ENCODE measurements at regions of chr20 and their contacts with region 1.

Region 1: DNA sequence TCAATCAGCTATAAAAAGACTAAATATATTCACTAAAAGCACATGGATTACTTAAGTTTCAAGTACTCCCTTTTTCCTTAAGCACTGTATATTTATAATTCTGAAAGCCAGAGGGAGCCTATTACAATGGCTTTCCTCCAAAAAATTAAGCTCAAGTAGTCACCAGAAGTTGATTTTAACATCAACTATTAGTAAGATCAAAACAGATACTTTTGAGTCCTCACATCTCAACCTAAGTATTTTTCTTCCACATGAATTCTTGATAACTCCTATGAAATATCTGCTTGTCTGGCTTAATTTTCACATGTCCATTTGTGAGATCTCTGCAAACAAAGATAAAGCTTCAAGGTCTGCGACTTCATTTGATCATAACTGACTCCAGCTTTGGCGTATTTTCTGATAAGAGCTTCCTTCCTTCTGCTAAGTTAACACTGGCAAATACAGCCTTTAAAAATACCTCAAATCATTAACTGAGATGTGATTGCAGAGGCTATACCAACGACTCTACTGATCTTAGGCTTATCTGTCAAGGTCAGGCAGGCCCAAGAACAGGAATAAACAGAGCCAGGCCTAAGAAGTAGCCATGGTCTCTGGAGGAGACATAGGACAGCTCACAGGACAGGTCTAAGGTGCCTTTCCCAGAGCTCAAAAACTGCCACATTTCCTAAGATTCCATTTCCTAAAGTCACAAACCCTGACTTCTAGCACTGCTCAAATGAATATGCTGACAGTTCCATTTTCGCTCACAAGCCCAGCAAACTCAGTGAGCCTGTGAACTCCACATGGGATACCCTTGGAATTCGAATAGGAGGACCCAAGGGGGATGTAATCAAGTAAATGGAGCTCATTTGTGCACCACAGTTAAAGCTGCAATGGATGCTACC is 10.0 kb downstream of the SNX5 start:
- DNase-seq: peak in 1 of 2 donors; percentile 8
- ATAC-seq: peak in 1 of 3 donors; percentile 29
- H3K4me3 ChIP-seq: no peak overlapping the region
- H3K4me3 Mint-ChIP-seq: peak overlapping the region; percentile 51
- H3K27ac ChIP-seq: peak overlapping the region; percentile 24
- H3K27ac Mint-ChIP-seq: peak overlapping the region; percentile 76 to 98
- H3K4me1 ChIP-seq: peaks cover 36% of the 10 kb centered on the region
- H3K4me1 Mint-ChIP-seq: peaks cover 64 to 71% of the 10 kb centered on the region in 2 donors
- H3K27me3 ChIP-seq: no peaks in the 10 kb centered on the region
- H3K27me3 Mint-ChIP-seq: no peaks in the 10 kb centered on the region
- CTCF ChIP-seq: no peak

Region 2: GRCh38 chr20:17995967-17996819 is 37.6 kb after region 1 on chr20:
- intact Hi-C with region 1: loop called (anchors 5 kb)
- DNase-seq: peak in 1 of 2 donors; percentile 80
- ATAC-seq: peak; percentile 87 to 99 (median 95)
- H3K4me3 ChIP-seq: no peak overlapping the region
- H3K4me3 Mint-ChIP-seq: no peak overlapping the region
- H3K27ac ChIP-seq: no peak overlapping the region
- H3K27ac Mint-ChIP-seq: peak overlapping the region in 1 of 2 donors; percentile 37
- H3K4me1 ChIP-seq: peaks cover 3% of the 10 kb centered on the region
- H3K4me1 Mint-ChIP-seq: peaks cover 6 to 7% of the 10 kb centered on the region in 2 donors
- H3K27me3 ChIP-seq: no peaks in the 10 kb centered on the region
- H3K27me3 Mint-ChIP-seq: peaks cover 0 to 10% of the 10 kb centered on the region in 2 donors
- CTCF ChIP-seq: peak; percentile 92

Measured in natural killer cell (primary cell).